ENCODE measurements at regions of chr19 and their contacts with region 1.

Region 1: DNA sequence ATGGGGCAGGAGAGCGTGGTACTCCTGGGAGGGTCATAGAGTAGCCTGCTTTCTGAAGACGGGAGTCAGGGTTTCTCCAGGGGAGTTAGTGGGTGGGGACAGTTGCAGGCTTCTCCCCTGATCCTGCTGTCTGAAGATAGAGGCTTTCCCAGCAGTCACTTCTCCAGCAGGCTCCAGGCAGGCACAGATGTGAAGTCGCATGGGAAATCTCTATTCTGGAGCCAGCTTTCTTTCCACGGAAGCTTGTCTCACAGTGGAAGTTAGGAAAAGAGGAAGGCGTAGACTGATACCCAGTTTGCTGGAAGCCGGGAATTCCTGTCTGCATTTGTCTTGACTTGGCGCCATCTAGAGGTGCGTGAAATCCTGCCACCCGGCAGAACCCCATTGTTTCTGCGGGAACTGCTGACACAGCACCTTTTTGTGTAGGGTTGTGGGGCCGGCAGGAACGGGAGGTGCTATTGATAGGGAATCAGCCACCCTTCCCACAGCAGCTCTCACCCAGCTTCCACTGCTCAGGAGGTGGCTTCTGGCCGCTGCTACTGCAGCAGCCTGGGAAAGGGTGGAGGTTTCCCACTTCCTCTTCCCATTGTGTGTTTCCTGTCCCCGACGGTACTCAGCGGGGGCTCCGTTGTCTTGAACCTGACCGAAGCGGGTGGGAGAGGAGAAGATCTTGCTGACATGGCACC is 28.5 kb upstream of the NPAS1 start:
- DNase-seq: peak; percentile 78
- ATAC-seq: peak; percentile 76
- H3K4me3 ChIP-seq: no peak overlapping the region
- H3K27ac ChIP-seq: 0 out of 2 replicates have a peak overlapping the region, but pooled peaks have one; percentile 26
- H3K4me1 ChIP-seq: peaks cover 5% of the 10 kb centered on the region
- H3K27me3 ChIP-seq: no peaks in the 10 kb centered on the region
- CTCF ChIP-seq: peak; percentile 79

Region 2: DNA sequence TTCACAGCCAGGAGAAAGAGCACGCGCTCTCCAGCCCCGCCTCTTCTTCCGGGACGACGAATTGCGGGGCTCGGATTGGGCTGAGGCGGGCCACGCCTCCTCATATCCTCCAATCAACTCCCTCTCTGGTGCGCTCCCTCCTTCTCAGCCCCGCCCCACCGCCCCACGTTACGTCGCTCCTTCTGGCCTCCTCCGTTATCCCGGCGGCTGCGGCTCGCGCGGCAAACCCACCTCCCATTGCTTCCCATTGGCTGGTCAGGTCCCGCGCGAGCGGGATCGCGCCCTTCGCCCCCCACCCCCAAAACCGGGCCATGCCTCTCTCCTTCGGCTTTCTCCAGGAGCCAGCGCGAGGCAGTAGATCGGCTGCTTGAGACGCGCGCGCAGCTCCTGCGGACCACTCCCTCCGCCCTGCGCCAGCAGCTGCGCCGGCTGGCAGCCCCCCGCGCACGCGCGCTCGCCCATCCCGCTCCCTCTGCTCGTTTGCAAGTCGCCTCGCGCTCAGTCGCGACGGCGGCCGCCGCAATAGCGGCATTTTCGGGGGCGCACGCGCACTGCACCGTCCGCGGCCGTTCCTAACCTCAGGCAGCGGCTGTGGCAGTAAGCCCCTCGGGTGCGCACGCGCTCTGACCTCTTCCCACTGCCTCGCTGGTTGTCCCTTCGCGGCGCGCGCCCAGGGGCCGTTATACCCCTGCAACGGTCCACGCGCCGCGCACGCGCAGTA is 130.8 kb before region 1 on chr19:
- CTCF ChIA-PET with region 1: interaction called, 7 read pairs
- POLR2A ChIA-PET with region 1: no interaction called
- intact Hi-C with region 1: loop called (anchors 1 kb)
- DNase-seq: peak; percentile 94
- ATAC-seq: peak; percentile 69
- H3K4me3 ChIP-seq: peak overlapping the region; percentile 77
- H3K27ac ChIP-seq: peak overlapping the region; percentile 90
- H3K4me1 ChIP-seq: peaks cover 41% of the 10 kb centered on the region
- H3K27me3 ChIP-seq: no peaks in the 10 kb centered on the region
- CTCF ChIP-seq: no peak

Region 3: GRCh38 chr19:46866387-46867152 is 124.6 kb before region 1 on chr19:
- CTCF ChIA-PET with region 1: no interaction called
- POLR2A ChIA-PET with region 1: interaction called, 12 read pairs
- intact Hi-C with region 1: no loop called
- DNase-seq: peak; percentile 84
- ATAC-seq: peak; percentile 66
- H3K4me3 ChIP-seq: peak overlapping the region; percentile 43
- H3K27ac ChIP-seq: peak overlapping the region; percentile 75
- H3K4me1 ChIP-seq: peaks cover 61% of the 10 kb centered on the region
- H3K27me3 ChIP-seq: no peaks in the 10 kb centered on the region
- CTCF ChIP-seq: no peak

Region 4: GRCh38 chr19:46924874-46925547 is 66.1 kb before region 1 on chr19:
- CTCF ChIA-PET with region 1: no interaction called
- POLR2A ChIA-PET with region 1: no interaction called
- intact Hi-C with region 1: loop called (anchors 2 kb)
- DNase-seq: peak; percentile 94
- ATAC-seq: peak; percentile 77
- H3K4me3 ChIP-seq: peak overlapping the region; percentile 62
- H3K27ac ChIP-seq: peak overlapping the region; percentile 99
- H3K4me1 ChIP-seq: peaks cover 50% of the 10 kb centered on the region
- H3K27me3 ChIP-seq: no peaks in the 10 kb centered on the region
- CTCF ChIP-seq: no peak

Region 5: GRCh38 chr19:46954993-46955812 is 35.9 kb before region 1 on chr19:
- CTCF ChIA-PET with region 1: no interaction called
- POLR2A ChIA-PET with region 1: no interaction called
- intact Hi-C with region 1: loop called (anchors 5 kb)
- DNase-seq: peak; percentile 58
- ATAC-seq: peak; percentile 45
- H3K4me3 ChIP-seq: peak overlapping the region; percentile 44; the same call in 1 of the 2 replicates
- H3K27ac ChIP-seq: peak overlapping the region; percentile 79
- H3K4me1 ChIP-seq: peaks cover 40% of the 10 kb centered on the region
- H3K27me3 ChIP-seq: no peaks in the 10 kb centered on the region
- CTCF ChIP-seq: no peak

Measured in PC-3 (cell line).